ENCODE measurements at regions of chr12 and their contacts with region 1.

Region 1: GRCh38 chr12:76621582-76622024 is 62.0 kb upstream of the OSBPL8 start:
- DNase-seq: peak; percentile 44
- H3K4me3 Mint-ChIP-seq: no peak overlapping the region
- H3K27ac Mint-ChIP-seq: no peak overlapping the region
- H3K4me1 Mint-ChIP-seq: peaks cover 7% of the 10 kb centered on the region
- H3K27me3 Mint-ChIP-seq: peaks cover 8% of the 10 kb centered on the region

Region 2: GRCh38 chr12:76558684-76559399 is 62.8 kb before region 1 on chr12:
- intact Hi-C with region 1: no loop called
- DNase-seq: peak; percentile 81
- H3K4me3 Mint-ChIP-seq: peak overlapping the region; percentile 94
- H3K27ac Mint-ChIP-seq: peak overlapping the region; percentile 98
- H3K4me1 Mint-ChIP-seq: peaks cover 51% of the 10 kb centered on the region
- H3K27me3 Mint-ChIP-seq: no peaks in the 10 kb centered on the region

Region 3: DNA sequence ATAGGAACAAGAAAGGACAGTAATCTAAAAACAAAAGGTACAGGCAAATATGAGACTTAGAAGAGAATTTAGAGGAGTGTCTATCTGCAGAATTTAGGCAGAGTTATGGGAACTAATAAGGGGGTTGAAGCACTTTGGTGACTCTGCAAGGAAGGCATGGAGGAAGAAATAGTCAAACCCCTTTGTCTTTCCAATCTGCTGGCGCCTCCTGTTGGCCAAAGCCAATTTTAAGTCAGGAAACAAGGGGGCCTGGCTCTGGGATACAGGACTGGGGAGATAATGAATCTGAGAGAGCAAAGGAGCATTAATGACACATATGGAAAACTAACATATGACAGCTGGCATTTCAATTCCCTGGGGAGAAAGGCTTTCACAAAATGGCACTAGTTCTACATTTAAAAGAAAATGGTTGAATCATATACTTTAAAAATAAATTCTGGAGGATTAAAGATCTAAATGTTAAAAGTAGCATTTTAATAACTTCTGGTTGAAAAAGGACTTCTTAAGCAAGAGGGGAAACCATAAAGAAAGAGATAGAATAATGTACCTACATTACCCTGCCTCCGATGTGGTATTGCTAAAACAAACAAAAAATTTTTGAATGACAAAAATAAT is 305.7 kb after region 1 on chr12:
- intact Hi-C with region 1: loop called (anchors 1 kb)
- DNase-seq: no peak
- H3K4me3 Mint-ChIP-seq: no peak overlapping the region
- H3K27ac Mint-ChIP-seq: no peak overlapping the region
- H3K4me1 Mint-ChIP-seq: no peaks in the 10 kb centered on the region
- H3K27me3 Mint-ChIP-seq: no peaks in the 10 kb centered on the region

Region 4: GRCh38 chr12:77010691-77011548 is 389.3 kb after region 1 on chr12:
- intact Hi-C with region 1: loop called (anchors 1 kb)
- DNase-seq: peak; percentile 42
- H3K4me3 Mint-ChIP-seq: no peak overlapping the region
- H3K27ac Mint-ChIP-seq: no peak overlapping the region
- H3K4me1 Mint-ChIP-seq: peaks cover 5% of the 10 kb centered on the region
- H3K27me3 Mint-ChIP-seq: peaks cover 27% of the 10 kb centered on the region

Measured in activated T-helper 1 cell treated with anti-CD3 and anti-CD28 coated beads, Interleukin-12 subunit alpha, Interleukin-12 subunit beta, Interleukin-2, Interleukin-4 antibody, amounts not matched to agents 30 ng/mL and 10 ng/mL and 1 ng/mL, durations not matched to agents 14 hours and 24 hours and 36 hours (primary cell).